ENCODE measurements at regions of chr11 and their contacts with region 1.

Region 1: DNA sequence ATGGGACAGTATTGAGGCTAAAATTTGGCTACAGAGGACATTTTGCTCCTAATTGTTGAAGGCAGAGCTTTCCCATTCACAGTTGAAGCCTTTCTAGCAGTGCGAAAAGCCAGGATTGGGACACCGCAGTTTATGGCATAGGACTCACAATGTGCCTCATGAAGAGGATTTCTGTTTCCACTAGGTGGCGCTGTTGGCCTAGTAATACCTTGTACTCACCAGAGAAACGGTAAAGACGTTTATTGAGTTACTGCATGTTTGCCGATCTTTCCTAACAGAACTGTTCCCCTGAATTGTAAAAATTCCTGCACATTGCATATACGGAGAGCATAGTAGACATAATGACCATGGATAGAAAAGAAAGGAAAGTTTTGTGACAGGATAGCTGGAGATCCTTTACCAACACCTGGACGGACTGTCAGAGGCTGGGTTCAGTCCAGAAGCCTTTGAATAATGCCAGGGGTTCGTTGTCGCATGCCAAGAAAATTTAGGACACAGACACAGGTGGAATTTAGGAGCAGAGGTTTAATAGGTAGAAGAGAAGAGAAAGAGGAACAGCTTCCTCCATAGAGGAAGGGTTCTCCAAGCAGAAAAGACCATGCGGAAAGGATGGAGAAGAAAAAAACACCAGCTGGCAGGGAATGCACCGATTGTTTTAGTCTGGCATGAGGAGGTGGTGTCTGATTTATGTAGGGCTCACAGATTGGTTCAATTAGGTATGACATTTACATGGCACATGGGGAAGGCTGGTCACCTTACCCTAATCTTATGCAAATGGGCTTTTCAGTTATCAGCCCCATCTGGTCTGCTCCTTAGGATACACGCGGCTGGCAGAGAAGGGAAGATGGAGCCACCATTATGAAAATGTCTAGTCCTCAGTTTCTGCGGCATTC is 10.8 kb upstream of the OR51D1 start:
- DNase-seq: peak; percentile 37
- H3K4me3 ChIP-seq: no peak overlapping the region
- H3K27ac ChIP-seq: no peak overlapping the region
- H3K4me1 ChIP-seq: no peaks in the 10 kb centered on the region
- H3K27me3 ChIP-seq: peaks cover 2% of the 10 kb centered on the region in 2 experiments
- CTCF ChIP-seq: peak; percentile 54 to 63
- POLR2A ChIP-seq: no peak

Region 2: GRCh38 chr11:4480574-4481566 is 145.6 kb before region 1 on chr11:
- CTCF ChIA-PET with region 1: no interaction called
- POLR2A ChIA-PET with region 1: no interaction called
- dilution Hi-C with region 1: no loop called
- intact Hi-C with region 1: no loop called
- DNase-seq: peak; percentile 66
- H3K4me3 ChIP-seq: no peak overlapping the region
- H3K27ac ChIP-seq: peak overlapping the region; percentile 71
- H3K4me1 ChIP-seq: peaks cover 21% of the 10 kb centered on the region
- H3K27me3 ChIP-seq: peaks cover 0 to 1% of the 10 kb centered on the region in 2 experiments
- CTCF ChIP-seq: no peak
- POLR2A ChIP-seq: no peak

Region 3: GRCh38 chr11:4511282-4512245 is 114.9 kb before region 1 on chr11:
- CTCF ChIA-PET with region 1: no interaction called
- POLR2A ChIA-PET with region 1: no interaction called
- dilution Hi-C with region 1: no loop called
- intact Hi-C with region 1: no loop called
- DNase-seq: no peak
- H3K4me3 ChIP-seq: no peak overlapping the region
- H3K27ac ChIP-seq: no peak overlapping the region
- H3K4me1 ChIP-seq: no peaks in the 10 kb centered on the region
- H3K27me3 ChIP-seq: no peaks in the 10 kb centered on the region
- CTCF ChIP-seq: no peak
- POLR2A ChIP-seq: no peak

Region 4: DNA sequence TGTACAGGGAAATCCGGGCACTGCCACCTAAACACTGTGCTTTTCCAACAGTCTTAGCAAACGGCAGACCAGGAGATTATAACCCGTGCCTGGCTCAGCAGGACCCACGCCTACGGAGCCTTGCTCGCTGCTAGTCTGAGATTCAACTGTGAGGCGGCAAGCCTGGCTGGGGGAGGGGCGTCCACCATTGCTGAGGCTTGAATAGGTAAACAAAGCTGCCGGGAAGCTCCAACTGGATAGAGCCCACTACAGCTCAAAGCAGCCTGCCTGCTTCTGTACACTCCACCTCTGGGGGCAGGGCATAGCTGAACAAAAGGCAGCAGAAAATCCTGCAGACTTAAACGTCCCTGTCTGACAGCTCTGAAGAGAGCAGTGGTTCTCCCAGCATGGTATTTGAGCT is 94.8 kb before region 1 on chr11:
- CTCF ChIA-PET with region 1: no interaction called
- POLR2A ChIA-PET with region 1: no interaction called
- dilution Hi-C with region 1: no loop called
- intact Hi-C with region 1: no loop called
- DNase-seq: no peak
- H3K4me3 ChIP-seq: no peak overlapping the region
- H3K27ac ChIP-seq: no peak overlapping the region
- H3K4me1 ChIP-seq: no peaks in the 10 kb centered on the region
- H3K27me3 ChIP-seq: no peaks in the 10 kb centered on the region
- CTCF ChIP-seq: no peak
- POLR2A ChIP-seq: no peak

Region 5: GRCh38 chr11:5004424-5005274 is 378.2 kb after region 1 on chr11:
- CTCF ChIA-PET with region 1: no interaction called
- POLR2A ChIA-PET with region 1: no interaction called
- dilution Hi-C with region 1: no loop called
- intact Hi-C with region 1: loop called (anchors 1 kb)
- DNase-seq: peak; percentile 55
- H3K4me3 ChIP-seq: no peak overlapping the region
- H3K27ac ChIP-seq: no peak overlapping the region
- H3K4me1 ChIP-seq: no peaks in the 10 kb centered on the region
- H3K27me3 ChIP-seq: no peaks in the 10 kb centered on the region
- CTCF ChIP-seq: peak; percentile 27 to 47
- POLR2A ChIP-seq: no peak

Region 6: GRCh38 chr11:5380740-5381342 is 754.4 kb after region 1 on chr11:
- CTCF ChIA-PET with region 1: interaction called, 3 read pairs
- POLR2A ChIA-PET with region 1: no interaction called
- dilution Hi-C with region 1: no loop called
- intact Hi-C with region 1: loop called (anchors 2 kb)
- DNase-seq: peak; percentile 69
- H3K4me3 ChIP-seq: no peak overlapping the region
- H3K27ac ChIP-seq: no peak overlapping the region
- H3K4me1 ChIP-seq: no peaks in the 10 kb centered on the region
- H3K27me3 ChIP-seq: peaks cover 0 to 2% of the 10 kb centered on the region in 2 experiments
- CTCF ChIP-seq: peak; percentile 67 to 84
- POLR2A ChIP-seq: no peak

Measured in endothelial cell of umbilical vein (primary cell).